ENCODE measurements at regions of chr5 and their contacts with region 1.

Region 1: DNA sequence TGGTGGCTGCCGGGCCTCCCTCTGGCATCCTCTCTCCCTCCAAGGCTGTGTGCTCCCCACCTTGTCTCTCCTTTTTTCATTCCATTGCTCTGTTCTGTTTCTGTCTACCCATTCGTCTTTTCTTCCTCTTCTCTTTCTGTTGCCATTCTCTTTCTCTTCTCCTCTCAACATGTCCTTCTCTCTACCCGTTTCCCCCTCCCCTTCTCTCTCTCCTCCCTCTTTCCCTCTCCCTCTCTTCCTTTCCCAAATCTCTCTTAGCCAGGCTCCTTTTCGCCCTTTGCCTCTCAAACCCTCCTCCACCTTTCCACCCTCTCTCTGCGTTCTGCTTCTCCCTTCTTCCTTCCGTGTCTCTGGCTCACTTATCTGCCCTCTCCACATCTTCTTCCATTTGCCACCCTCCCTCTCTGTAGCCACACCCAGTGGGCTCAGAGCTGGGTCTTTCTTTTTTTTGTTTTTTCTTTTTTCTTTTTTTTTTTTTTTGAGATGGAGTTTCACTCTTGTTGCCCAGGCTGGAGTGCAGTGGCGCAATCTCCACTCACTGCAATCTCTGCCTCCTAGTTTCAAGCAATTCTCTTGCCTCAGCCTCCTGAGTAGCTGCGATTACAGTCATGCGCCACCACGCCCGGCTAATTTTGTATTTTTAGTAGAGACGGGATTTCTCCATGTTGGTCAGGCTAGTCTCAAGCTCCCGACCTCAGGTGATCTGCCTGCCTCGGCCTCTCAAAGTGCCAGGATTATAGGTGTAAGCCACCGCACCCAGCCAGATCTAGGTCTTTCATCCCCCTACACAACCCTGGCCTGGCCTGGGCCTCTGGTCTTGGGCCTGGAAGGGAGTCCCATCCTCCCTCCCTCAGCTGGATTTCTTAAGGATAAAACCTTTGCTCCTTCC is 19.1 kb upstream of the KCNIP1 start:
- DNase-seq: peak; percentile 53 to 63 (median 61)
- H3K4me3 ChIP-seq: peak overlapping the region in 1 of 3 experiments; percentile 50
- H3K4me3 Mint-ChIP-seq: peak overlapping the region; percentile 52 to 62
- H3K27ac ChIP-seq: peak overlapping the region; percentile 81 to 82
- H3K27ac Mint-ChIP-seq: peak overlapping the region; percentile 89 to 99 (median 94)
- H3K4me1 ChIP-seq: peaks cover 36 to 39% of the 10 kb centered on the region in 2 donors
- H3K4me1 Mint-ChIP-seq: peaks cover 44% of the 10 kb centered on the region
- H3K27me3 ChIP-seq: no peaks in the 10 kb centered on the region
- H3K27me3 Mint-ChIP-seq: peaks cover 0 to 3% (median 2%) of the 10 kb centered on the region in 3 donors
- CTCF ChIP-seq: no peak

Region 2: GRCh38 chr5:170451747-170452365 is 32.9 kb before region 1 on chr5:
- intact Hi-C with region 1: loop called in 1 of 2 experiments (anchors 5 kb)
- DNase-seq: peak; percentile 83 to 93 (median 89)
- H3K4me3 ChIP-seq: no peak overlapping the region
- H3K4me3 Mint-ChIP-seq: no peak overlapping the region
- H3K27ac ChIP-seq: peak overlapping the region; percentile 37 to 81
- H3K27ac Mint-ChIP-seq: peak overlapping the region; percentile 74 to 94 (median 88)
- H3K4me1 ChIP-seq: peaks cover 19 to 20% of the 10 kb centered on the region in 2 donors
- H3K4me1 Mint-ChIP-seq: peaks cover 25% of the 10 kb centered on the region
- H3K27me3 ChIP-seq: no peaks in the 10 kb centered on the region
- H3K27me3 Mint-ChIP-seq: peaks cover 0 to 2% (median 0%) of the 10 kb centered on the region in 3 donors
- CTCF ChIP-seq: no peak

Region 3: DNA sequence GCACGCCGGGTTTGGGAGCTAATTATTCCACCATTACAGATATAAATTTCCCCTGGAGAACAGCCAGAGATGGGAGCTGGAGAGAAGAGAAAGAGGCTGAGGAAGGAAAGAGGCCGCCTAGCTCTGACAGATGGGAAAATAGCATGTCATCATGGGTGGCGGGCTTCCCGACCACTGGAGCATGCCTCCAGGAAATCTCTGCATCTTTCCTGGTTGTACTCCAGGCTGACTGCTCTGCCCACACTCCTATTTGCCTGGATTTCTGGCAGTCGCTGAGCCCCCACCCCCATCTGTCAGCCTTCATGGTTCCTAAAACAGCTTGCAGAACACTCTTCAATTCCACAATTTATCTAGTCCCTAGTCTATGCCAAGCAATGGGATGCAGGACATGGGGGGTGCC is 284.5 kb after region 1 on chr5:
- intact Hi-C with region 1: no loop called
- DNase-seq: no peak
- H3K4me3 ChIP-seq: no peak overlapping the region
- H3K4me3 Mint-ChIP-seq: no peak overlapping the region
- H3K27ac ChIP-seq: no peak overlapping the region
- H3K27ac Mint-ChIP-seq: no peak overlapping the region
- H3K4me1 ChIP-seq: no peaks in the 10 kb centered on the region
- H3K4me1 Mint-ChIP-seq: no peaks in the 10 kb centered on the region
- H3K27me3 ChIP-seq: no peaks in the 10 kb centered on the region
- H3K27me3 Mint-ChIP-seq: peaks cover 5 to 14% (median 7%) of the 10 kb centered on the region in 3 donors
- CTCF ChIP-seq: no peak

Measured in CD14-positive monocyte (primary cell).